ENCODE measurements at regions of chr5 and their contacts with region 1.

Region 1: GRCh38 chr5:110757118-110757729 is 18.4 kb downstream of the SLC25A46 start:
- DNase-seq: peak; percentile 61
- H3K4me3 ChIP-seq: no peak overlapping the region
- H3K27ac ChIP-seq: no peak overlapping the region
- H3K4me1 ChIP-seq: peaks cover 3% of the 10 kb centered on the region
- CTCF ChIP-seq: peak; percentile 91

Region 2: DNA sequence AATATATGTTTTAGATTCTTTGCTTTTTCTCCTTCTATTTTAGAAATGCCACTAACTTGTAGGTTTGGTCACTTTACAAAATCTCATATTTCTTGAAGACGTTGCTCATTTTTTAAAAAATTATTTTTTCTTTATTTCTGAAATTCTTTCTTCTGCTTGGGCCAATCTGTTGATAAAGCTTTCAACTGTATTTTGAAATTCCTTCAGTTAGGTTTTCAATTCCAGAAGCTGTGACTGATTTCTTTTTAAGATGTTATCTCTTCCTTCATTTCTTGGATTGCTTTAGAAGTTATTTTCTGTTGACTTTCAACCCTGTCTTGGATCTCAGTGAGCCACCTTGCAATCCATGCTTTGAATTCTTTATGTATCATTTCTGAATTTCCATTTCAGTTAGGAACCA is 45.8 kb after region 1 on chr5:
- CTCF ChIA-PET with region 1: no interaction called
- POLR2A ChIA-PET with region 1: no interaction called
- intact Hi-C with region 1: no loop called
- DNase-seq: no peak
- H3K4me3 ChIP-seq: no peak overlapping the region
- H3K27ac ChIP-seq: no peak overlapping the region
- H3K4me1 ChIP-seq: no peaks in the 10 kb centered on the region
- CTCF ChIP-seq: no peak

Region 3: GRCh38 chr5:111063700-111064322 is 306.6 kb after region 1 on chr5:
- CTCF ChIA-PET with region 1: no interaction called
- POLR2A ChIA-PET with region 1: no interaction called
- intact Hi-C with region 1: loop called (anchors 10 kb)
- DNase-seq: peak; percentile 33
- H3K4me3 ChIP-seq: no peak overlapping the region
- H3K27ac ChIP-seq: no peak overlapping the region
- H3K4me1 ChIP-seq: no peaks in the 10 kb centered on the region
- CTCF ChIP-seq: peak; percentile 78

Region 4: DNA sequence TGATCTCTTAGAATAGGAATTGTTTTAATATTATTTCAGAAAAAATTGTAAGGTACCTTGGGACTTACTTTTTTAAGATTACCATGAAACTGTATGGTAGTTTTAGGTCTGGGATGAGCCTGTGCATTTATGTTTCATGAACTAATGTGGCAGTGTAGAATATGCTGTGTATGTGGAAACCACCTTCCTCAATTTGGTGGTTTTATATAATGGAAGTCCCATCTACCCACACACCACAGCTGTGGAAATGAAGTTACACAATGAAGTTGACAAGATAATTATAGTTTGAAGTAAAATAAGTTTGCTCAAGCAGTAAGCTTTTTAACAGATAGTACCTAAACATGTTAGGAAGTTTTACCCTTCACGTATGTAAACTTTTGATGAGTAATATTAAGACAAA is 359.3 kb after region 1 on chr5:
- CTCF ChIA-PET with region 1: no interaction called
- POLR2A ChIA-PET with region 1: no interaction called
- intact Hi-C with region 1: loop called (anchors 10 kb)
- DNase-seq: no peak
- H3K4me3 ChIP-seq: no peak overlapping the region
- H3K27ac ChIP-seq: no peak overlapping the region
- H3K4me1 ChIP-seq: no peaks in the 10 kb centered on the region
- CTCF ChIP-seq: no peak

Measured in OCI-LY7 (cell line).